CD4-positive, alpha-beta memory T cell (primary cell): ENCODE measurements at regions of chr10 and their contacts with region 1.

Region 1: DNA sequence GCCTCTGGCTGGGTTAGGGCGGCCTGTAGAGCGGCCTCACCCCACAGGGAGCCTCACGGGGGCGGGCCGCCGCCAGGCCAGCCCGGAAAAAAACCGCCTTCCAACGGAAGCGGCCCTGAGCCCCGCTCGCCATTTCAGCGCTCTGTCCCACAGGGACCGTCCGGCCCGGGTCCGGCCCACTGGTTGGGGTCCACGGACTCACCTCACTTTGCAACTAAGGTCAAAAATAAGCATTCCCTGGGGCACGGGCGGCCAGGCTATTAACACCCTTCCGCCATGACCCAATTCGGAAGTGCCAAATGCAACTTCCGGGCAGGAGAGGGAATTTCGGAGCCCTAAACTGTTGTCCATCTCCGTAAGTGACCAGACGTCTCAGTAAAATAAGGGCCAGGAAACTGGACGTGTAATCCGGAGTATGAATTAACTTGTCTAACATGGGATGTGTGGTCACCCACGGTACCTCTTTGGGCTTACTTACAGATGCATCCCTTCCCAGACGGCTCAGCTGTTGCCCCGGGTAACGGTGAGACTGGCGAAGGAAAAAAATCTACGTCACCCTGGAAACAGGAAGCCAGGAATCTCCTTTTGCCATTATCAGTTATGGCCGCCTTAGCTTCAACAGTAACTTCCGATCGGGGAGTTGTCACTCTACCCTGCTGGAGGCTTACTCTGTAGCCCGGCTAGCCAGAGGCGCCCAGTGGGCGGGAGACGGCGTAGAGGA is at the start of gene BBIP1:
- DNase-seq: peak in 1 of 5 donors; percentile 96
- H3K4me3 ChIP-seq: peak within 1 kb of the TSS; percentile 85 to 99
- H3K4me3 Mint-ChIP-seq: peak within 1 kb of the TSS; percentile 92 to 99 (median 98)
- H3K27ac ChIP-seq: peak within 1 kb of the TSS; percentile 99
- H3K27ac Mint-ChIP-seq: peak within 1 kb of the TSS; percentile 98 to 100 (median 100)
- H3K4me1 ChIP-seq: peaks cover 43% of the 10 kb centered on the region
- H3K4me1 Mint-ChIP-seq: peaks cover 27 to 64% (median 35%) of the 10 kb centered on the region in 4 donors
- H3K27me3 ChIP-seq: no peaks in the 10 kb centered on the region
- H3K27me3 Mint-ChIP-seq: no peaks in the 10 kb centered on the region
- total RNA-seq, gene BBIP1: 42.9 to 46.8 TPM

Region 2: GRCh38 chr10:110857265-110858158 is 61.3 kb before region 1 on chr10:
- CTCF ChIA-PET with region 1: no interaction called
- POLR2A ChIA-PET with region 1: interaction called, 17 read pairs
- intact Hi-C with region 1: no loop called
- DNase-seq: peak in 4 of 5 donors; percentile 51 to 71 (median 56)
- H3K4me3 ChIP-seq: no peak overlapping the region
- H3K4me3 Mint-ChIP-seq: peak overlapping the region in 7 of 8 donors; percentile 53 to 89 (median 72)
- H3K27ac ChIP-seq: peak overlapping the region; percentile 57
- H3K27ac Mint-ChIP-seq: peak overlapping the region; percentile 91 to 99 (median 97)
- H3K4me1 ChIP-seq: peaks cover 91% of the 10 kb centered on the region
- H3K4me1 Mint-ChIP-seq: peaks cover 67 to 92% (median 79%) of the 10 kb centered on the region in 4 donors
- H3K27me3 ChIP-seq: no peaks in the 10 kb centered on the region
- H3K27me3 Mint-ChIP-seq: no peaks in the 10 kb centered on the region

Region 3: DNA sequence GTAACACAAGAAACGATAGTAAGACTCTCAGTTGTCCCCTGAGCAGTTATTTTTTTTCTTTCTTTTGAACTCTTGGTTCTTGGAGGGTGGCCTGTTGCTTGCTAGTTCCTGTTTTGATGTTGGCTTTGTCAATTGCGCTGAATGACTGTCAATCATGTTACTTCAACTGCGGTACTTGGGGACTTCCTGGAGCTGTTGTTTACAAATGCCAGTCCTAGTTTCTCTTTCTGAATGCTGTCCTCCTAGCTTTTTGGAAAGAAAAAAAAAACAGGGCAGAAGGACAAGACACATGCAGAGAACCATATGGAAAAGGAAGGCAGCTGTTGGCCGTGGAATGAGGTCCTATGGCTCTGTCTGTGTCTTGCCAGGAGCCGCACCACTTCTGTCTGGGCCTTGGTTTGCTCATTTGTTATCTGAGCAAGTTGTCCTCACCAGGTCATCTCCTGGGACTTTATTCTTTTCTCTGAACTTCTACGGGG is 54.1 kb before region 1 on chr10:
- CTCF ChIA-PET with region 1: no interaction called
- POLR2A ChIA-PET with region 1: interaction called, 16 read pairs
- intact Hi-C with region 1: no loop called
- DNase-seq: peak; percentile 85 to 91 (median 87)
- H3K4me3 ChIP-seq: peak overlapping the region in 1 of 2 donors; percentile 31
- H3K4me3 Mint-ChIP-seq: peak overlapping the region; percentile 81 to 93 (median 86)
- H3K27ac ChIP-seq: peak overlapping the region; percentile 98
- H3K27ac Mint-ChIP-seq: peak overlapping the region; percentile 91 to 100 (median 99)
- H3K4me1 ChIP-seq: peaks cover 99% of the 10 kb centered on the region
- H3K4me1 Mint-ChIP-seq: peaks cover 78 to 100% (median 93%) of the 10 kb centered on the region in 4 donors
- H3K27me3 ChIP-seq: no peaks in the 10 kb centered on the region
- H3K27me3 Mint-ChIP-seq: no peaks in the 10 kb centered on the region

Region 4: GRCh38 chr10:110893559-110894179 is 25.1 kb before region 1 on chr10:
- CTCF ChIA-PET with region 1: interaction called, 9 read pairs
- POLR2A ChIA-PET with region 1: interaction called, 4 read pairs
- intact Hi-C with region 1: loop called (anchors 2 kb)
- DNase-seq: peak in 4 of 5 donors; percentile 60 to 66 (median 64)
- H3K4me3 ChIP-seq: no peak overlapping the region
- H3K4me3 Mint-ChIP-seq: no peak overlapping the region
- H3K27ac ChIP-seq: peak overlapping the region; percentile 6
- H3K27ac Mint-ChIP-seq: peak overlapping the region in 4 of 7 donors; percentile 0 to 43 (median 36)
- H3K4me1 ChIP-seq: peaks cover 49% of the 10 kb centered on the region
- H3K4me1 Mint-ChIP-seq: peaks cover 28 to 64% (median 50%) of the 10 kb centered on the region in 4 donors
- H3K27me3 ChIP-seq: no peaks in the 10 kb centered on the region
- H3K27me3 Mint-ChIP-seq: no peaks in the 10 kb centered on the region

Region 5: GRCh38 chr10:110901954-110902819 is 16.6 kb before region 1 on chr10:
- CTCF ChIA-PET with region 1: interaction called, 6 read pairs
- POLR2A ChIA-PET with region 1: interaction called, 17 read pairs
- intact Hi-C with region 1: no loop called
- DNase-seq: no peak
- H3K4me3 ChIP-seq: no peak overlapping the region
- H3K4me3 Mint-ChIP-seq: no peak overlapping the region
- H3K27ac ChIP-seq: no peak overlapping the region
- H3K27ac Mint-ChIP-seq: peak overlapping the region in 6 of 7 donors; percentile 55 to 88 (median 68)
- H3K4me1 ChIP-seq: peaks cover under 1% of the 10 kb centered on the region
- H3K4me1 Mint-ChIP-seq: peaks cover 11 to 33% (median 24%) of the 10 kb centered on the region in 4 donors
- H3K27me3 ChIP-seq: no peaks in the 10 kb centered on the region
- H3K27me3 Mint-ChIP-seq: no peaks in the 10 kb centered on the region

Region 6: GRCh38 chr10:110931769-110932381 is 13.1 kb after region 1 on chr10:
- CTCF ChIA-PET with region 1: interaction called, 4 read pairs
- POLR2A ChIA-PET with region 1: interaction called, 28 read pairs
- intact Hi-C with region 1: no loop called
- DNase-seq: no peak
- H3K4me3 ChIP-seq: no peak overlapping the region
- H3K4me3 Mint-ChIP-seq: no peak overlapping the region
- H3K27ac ChIP-seq: no peak overlapping the region
- H3K27ac Mint-ChIP-seq: no peak overlapping the region
- H3K4me1 ChIP-seq: peaks cover 52% of the 10 kb centered on the region
- H3K4me1 Mint-ChIP-seq: peaks cover 13 to 26% (median 22%) of the 10 kb centered on the region in 4 donors
- H3K27me3 ChIP-seq: no peaks in the 10 kb centered on the region
- H3K27me3 Mint-ChIP-seq: no peaks in the 10 kb centered on the region

Region 7: GRCh38 chr10:110993024-110993693 is 74.4 kb after region 1 on chr10:
- CTCF ChIA-PET with region 1: no interaction called
- POLR2A ChIA-PET with region 1: interaction called, 14 read pairs
- intact Hi-C with region 1: loop called (anchors 1 kb)
- DNase-seq: peak; percentile 51 to 65 (median 62)
- H3K4me3 ChIP-seq: no peak overlapping the region
- H3K4me3 Mint-ChIP-seq: peak overlapping the region in 6 of 8 donors; percentile 24 to 79 (median 64)
- H3K27ac ChIP-seq: no peak overlapping the region
- H3K27ac Mint-ChIP-seq: peak overlapping the region; percentile 30 to 79 (median 61)
- H3K4me1 ChIP-seq: peaks cover 27% of the 10 kb centered on the region
- H3K4me1 Mint-ChIP-seq: peaks cover 29 to 57% (median 42%) of the 10 kb centered on the region in 4 donors
- H3K27me3 ChIP-seq: no peaks in the 10 kb centered on the region
- H3K27me3 Mint-ChIP-seq: no peaks in the 10 kb centered on the region